ENCODE measurements at regions of chr3 and their contacts with region 1.

Region 1: DNA sequence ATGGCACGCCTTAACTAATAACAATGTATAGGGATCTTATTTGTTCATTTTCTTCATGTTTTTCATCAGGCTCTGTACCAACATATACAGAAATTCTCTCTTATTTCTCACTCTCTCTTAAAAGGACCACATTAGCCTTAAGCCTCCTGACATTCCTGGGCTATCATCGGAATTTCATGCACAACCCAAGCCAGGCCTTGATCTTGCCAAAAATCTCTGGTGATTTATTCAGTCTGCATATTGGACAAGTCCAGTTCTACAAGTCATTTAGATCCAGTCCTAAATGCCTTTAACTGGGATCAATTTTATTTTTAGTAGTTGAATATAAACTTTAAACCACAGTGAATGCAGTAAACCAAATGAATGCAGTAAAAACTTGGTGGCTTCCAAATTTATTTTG is 385.4 kb downstream of the MECOM start:
- DNase-seq: no peak
- H3K4me3 ChIP-seq: no peak overlapping the region
- H3K27ac ChIP-seq: peak overlapping the region; percentile 65 to 67
- H3K4me1 ChIP-seq: peaks cover 3 to 28% of the 10 kb centered on the region in 2 donors
- H3K27me3 ChIP-seq: no peaks in the 10 kb centered on the region
- CTCF ChIP-seq: no peak

Region 2: GRCh38 chr3:169241991-169242707 is 35.9 kb before region 1 on chr3:
- intact Hi-C with region 1: loop called (anchors 5 kb)
- DNase-seq: peak in 1 of 2 donors; percentile 69
- H3K4me3 ChIP-seq: peak overlapping the region; percentile 53 to 70
- H3K27ac ChIP-seq: peak overlapping the region; percentile 88 to 91
- H3K4me1 ChIP-seq: peaks cover 0 to 32% of the 10 kb centered on the region in 2 donors
- H3K27me3 ChIP-seq: no peaks in the 10 kb centered on the region
- CTCF ChIP-seq: no peak

Measured in ascending aorta (tissue), 2 donors.